PC-9 (cell line): ENCODE measurements at regions of chr12 and their contacts with region 1.

Region 1: DNA sequence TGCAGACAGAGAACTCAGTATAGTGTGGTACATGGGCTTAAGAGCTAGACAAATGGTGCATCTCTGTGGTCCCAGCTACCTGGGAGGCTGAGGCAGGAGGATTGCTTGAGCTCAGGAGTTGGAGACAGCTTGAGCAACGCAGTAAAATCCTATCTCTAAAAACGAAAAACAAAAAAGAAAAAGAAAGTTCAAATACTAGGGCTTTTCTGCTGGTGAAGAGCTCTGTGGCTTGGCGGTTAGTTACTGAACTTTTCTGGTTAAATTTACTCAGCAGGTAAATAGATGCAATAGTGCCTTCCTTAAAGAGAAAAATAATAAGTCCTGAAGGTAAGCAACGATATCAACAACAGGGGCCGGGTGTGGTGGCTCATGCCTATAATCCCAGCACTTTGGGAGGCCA is 31.4 kb upstream of the RAP1B start:
- DNase-seq: no peak
- H3K4me3 ChIP-seq: no peak overlapping the region
- H3K27ac ChIP-seq: no peak overlapping the region
- H3K4me1 ChIP-seq: peaks cover 8% of the 10 kb centered on the region
- H3K27me3 ChIP-seq: no peaks in the 10 kb centered on the region
- CTCF ChIP-seq: no peak

Region 2: GRCh38 chr12:68345763-68346162 is 233.5 kb before region 1 on chr12:
- CTCF ChIA-PET with region 1: no interaction called
- POLR2A ChIA-PET with region 1: interaction called, 27 read pairs
- intact Hi-C with region 1: no loop called
- DNase-seq: no peak
- H3K4me3 ChIP-seq: no peak overlapping the region
- H3K27ac ChIP-seq: no peak overlapping the region
- H3K4me1 ChIP-seq: no peaks in the 10 kb centered on the region
- H3K27me3 ChIP-seq: peaks cover 14% of the 10 kb centered on the region
- CTCF ChIP-seq: no peak

Region 3: DNA sequence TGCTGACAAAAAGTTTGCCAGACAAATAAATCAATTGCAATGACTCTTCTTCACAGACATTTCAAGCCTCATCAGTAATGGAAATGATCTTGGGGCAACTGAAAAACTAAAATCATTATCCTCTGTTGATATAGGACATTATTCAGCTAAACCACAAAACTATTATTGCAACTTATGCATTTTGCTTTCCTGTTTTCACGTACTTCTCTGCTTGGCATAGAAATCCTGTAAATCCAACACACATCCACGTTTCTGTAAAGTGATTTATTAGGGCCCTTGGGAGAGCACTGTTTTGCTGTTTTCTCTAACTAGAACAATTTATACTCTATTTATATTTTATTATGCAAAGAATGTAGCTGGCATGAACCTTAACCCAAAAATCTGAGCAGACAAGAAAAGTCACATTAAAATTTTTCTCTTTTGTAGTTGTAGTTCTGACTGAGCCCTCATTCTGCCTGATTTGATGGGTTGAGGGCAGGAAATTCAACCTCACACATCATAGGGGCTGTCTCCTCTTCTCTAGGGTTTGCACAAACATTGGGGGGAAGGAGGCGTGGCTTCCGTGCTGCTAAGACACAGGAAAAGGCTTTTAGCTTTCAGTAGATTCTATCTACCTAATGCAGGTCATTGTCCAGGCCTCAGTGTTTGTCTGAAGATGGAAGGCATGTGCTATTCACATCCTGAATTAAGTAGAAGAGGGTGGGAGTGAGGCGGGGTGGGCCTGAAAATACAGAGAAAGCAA is 96.0 kb after region 1 on chr12:
- CTCF ChIA-PET with region 1: no interaction called
- POLR2A ChIA-PET with region 1: interaction called, 19 read pairs
- intact Hi-C with region 1: no loop called
- DNase-seq: no peak
- H3K4me3 ChIP-seq: no peak overlapping the region
- H3K27ac ChIP-seq: 0 out of 2 replicates have a peak overlapping the region, but pooled peaks have one; percentile 21
- H3K4me1 ChIP-seq: peaks cover 14% of the 10 kb centered on the region
- H3K27me3 ChIP-seq: no peaks in the 10 kb centered on the region
- CTCF ChIP-seq: no peak